CD8-positive, alpha-beta T cell (primary cell): ENCODE measurements at regions of chr5 and their contacts with region 1.

Region 1: GRCh38 chr5:131548176-131548575 is 86.9 kb downstream of the RAPGEF6 start:
- DNase-seq: peak in 2 of 9 experiments; percentile 61 to 78
- ATAC-seq: peak; percentile 95
- H3K4me3 ChIP-seq: peak overlapping the region; percentile 51 to 55
- H3K4me3 Mint-ChIP-seq: peak overlapping the region; percentile 95
- H3K27ac ChIP-seq: peak overlapping the region; percentile 56 to 67
- H3K27ac Mint-ChIP-seq: peak overlapping the region; percentile 97
- H3K4me1 ChIP-seq: peaks cover 44% of the 10 kb centered on the region
- H3K4me1 Mint-ChIP-seq: peaks cover 63% of the 10 kb centered on the region
- H3K27me3 ChIP-seq: no peaks in the 10 kb centered on the region
- H3K27me3 Mint-ChIP-seq: no peaks in the 10 kb centered on the region
- CTCF ChIP-seq: no peak

Region 2: DNA sequence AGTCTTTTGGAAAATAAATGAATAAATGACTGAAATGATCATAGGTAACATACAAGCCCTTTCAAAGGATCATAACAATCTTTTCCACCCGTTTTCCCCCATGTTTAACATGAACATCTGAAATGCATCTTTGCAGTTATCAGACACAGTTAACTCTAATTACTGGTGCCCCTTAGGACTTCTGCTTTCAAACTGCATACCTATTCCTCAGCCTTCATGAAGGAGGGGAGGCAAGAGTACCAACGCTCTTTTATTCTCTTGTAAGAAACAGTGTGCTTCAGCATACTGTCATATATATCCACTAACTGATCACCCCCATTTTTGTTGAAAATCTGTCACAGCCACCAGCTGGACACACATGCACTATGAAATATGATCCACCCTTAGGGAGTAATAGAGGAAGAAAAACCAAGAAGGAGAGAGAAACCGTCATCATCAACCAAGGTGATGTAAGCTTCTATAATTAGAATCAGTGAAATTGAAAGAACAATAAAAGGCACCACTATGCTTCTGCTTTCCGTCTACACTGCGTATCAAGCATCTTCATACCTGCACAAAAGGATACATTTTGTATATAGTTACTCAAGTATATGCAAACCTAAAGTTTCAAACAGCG is 11.9 kb before region 1 on chr5:
- CTCF ChIA-PET with region 1: interaction called, 4 read pairs
- POLR2A ChIA-PET with region 1: interaction called, 19 read pairs
- intact Hi-C with region 1: loop called in 1 of 2 experiments (anchors 1 kb)
- DNase-seq: peak in 2 of 9 experiments; percentile 32 to 63
- ATAC-seq: peak; percentile 56
- H3K4me3 ChIP-seq: no peak overlapping the region
- H3K4me3 Mint-ChIP-seq: peak overlapping the region; percentile 66
- H3K27ac ChIP-seq: peak overlapping the region; percentile 1 to 41
- H3K27ac Mint-ChIP-seq: peak overlapping the region; percentile 93
- H3K4me1 ChIP-seq: peaks cover 88% of the 10 kb centered on the region
- H3K4me1 Mint-ChIP-seq: peaks cover 82% of the 10 kb centered on the region
- H3K27me3 ChIP-seq: no peaks in the 10 kb centered on the region
- H3K27me3 Mint-ChIP-seq: no peaks in the 10 kb centered on the region
- CTCF ChIP-seq: no peak

Region 3: DNA sequence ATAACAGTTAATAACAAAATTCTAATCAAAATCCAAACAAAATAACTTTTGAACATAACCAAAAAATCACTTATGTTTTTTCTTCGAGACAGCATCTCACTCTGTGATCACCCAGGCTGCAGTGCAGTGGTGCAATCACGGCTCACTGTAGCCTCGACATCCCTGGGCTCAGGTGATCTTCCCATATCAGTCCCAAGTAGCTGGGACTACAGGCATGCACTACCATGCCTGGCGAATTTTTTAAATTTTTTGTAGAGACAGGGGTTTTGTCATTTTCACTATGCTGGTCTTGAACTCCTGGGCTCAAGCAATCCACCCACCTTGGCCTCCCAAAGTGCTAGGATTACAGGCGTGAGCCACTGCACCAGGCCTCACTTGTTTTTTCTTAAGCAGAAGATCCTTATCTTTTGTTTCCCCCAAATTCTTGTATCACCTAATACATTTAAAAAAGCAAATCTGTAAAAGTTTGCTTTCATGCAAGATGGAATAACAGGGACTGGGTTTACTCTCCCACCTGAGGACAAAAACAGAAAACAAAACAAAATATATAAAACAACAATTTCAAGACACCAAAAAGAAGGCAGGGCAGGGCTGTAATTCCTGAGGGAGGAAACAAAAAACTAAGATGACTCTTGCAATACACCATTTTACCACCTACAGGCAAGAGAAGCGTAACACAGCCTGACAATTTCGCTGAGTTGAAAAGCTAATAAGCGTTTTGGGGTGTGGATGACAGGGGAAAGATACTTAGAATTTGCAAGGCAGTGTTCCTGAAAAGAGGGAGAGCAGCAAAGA is 15.5 kb after region 1 on chr5:
- CTCF ChIA-PET with region 1: no interaction called
- POLR2A ChIA-PET with region 1: no interaction called
- intact Hi-C with region 1: loop called in 1 of 2 experiments (anchors 2 kb)
- DNase-seq: no peak
- ATAC-seq: no peak
- H3K4me3 ChIP-seq: no peak overlapping the region
- H3K4me3 Mint-ChIP-seq: no peak overlapping the region
- H3K27ac ChIP-seq: no peak overlapping the region
- H3K27ac Mint-ChIP-seq: peak overlapping the region; percentile 55
- H3K4me1 ChIP-seq: peaks cover 11% of the 10 kb centered on the region
- H3K4me1 Mint-ChIP-seq: peaks cover 51% of the 10 kb centered on the region
- H3K27me3 ChIP-seq: no peaks in the 10 kb centered on the region
- H3K27me3 Mint-ChIP-seq: no peaks in the 10 kb centered on the region
- CTCF ChIP-seq: no peak

Region 4: GRCh38 chr5:131575660-131576227 is 27.6 kb after region 1 on chr5:
- CTCF ChIA-PET with region 1: no interaction called
- POLR2A ChIA-PET with region 1: no interaction called
- intact Hi-C with region 1: no loop called
- DNase-seq: no peak
- ATAC-seq: no peak
- H3K4me3 ChIP-seq: no peak overlapping the region
- H3K4me3 Mint-ChIP-seq: no peak overlapping the region
- H3K27ac ChIP-seq: no peak overlapping the region
- H3K27ac Mint-ChIP-seq: no peak overlapping the region
- H3K4me1 ChIP-seq: no peaks in the 10 kb centered on the region
- H3K4me1 Mint-ChIP-seq: peaks cover 43% of the 10 kb centered on the region
- H3K27me3 ChIP-seq: no peaks in the 10 kb centered on the region
- H3K27me3 Mint-ChIP-seq: no peaks in the 10 kb centered on the region
- CTCF ChIP-seq: no peak